ENCODE measurements at regions of chr19 and their contacts with region 1.

Region 1: DNA sequence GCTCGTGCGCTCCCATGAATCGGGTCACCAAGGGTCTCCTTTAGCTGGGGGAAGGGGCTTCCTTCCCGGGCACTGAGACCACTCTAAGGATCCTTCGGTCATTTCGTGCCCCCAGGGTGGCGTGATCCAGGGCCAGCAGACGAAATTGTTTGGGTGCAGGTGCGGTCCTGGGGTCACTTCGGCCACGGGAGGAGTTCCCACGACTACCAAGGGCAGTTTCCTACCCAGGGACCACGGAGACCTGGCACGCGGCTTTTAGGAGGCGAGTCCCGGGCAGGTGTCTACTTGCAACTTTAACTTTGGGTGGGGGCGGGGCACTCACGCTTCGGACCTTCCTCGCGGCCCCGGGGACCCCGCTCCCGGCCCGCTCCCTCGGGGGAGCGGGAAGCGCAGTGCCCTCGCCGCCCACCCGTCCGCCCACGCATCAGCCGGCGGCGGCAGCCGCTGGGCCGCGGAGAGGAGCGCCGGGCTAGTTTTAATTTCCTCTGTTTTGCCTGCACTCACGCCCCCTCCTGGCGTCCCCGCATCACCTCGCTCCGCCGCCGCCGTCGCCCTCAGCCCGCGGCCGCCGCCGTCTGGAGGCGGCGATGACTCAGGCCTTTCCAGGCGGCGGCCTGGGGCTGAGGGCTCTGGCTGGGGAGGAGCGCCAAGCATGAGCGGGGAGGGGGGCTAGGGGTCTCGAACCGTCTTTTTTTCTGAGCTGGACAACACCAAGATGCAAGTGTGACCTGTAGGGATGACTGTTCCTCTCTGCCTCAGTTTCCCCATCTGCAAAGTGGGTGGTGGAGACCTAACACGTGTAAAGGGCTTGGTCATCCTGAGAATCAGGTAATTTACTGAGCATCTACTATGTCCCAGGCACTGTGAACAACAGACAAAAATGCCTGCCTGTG is 21.8 kb downstream of the OLFM2 start:
- DNase-seq: peak; percentile 63 to 85
- H3K4me3 ChIP-seq: peak overlapping the region; percentile 68
- H3K27ac ChIP-seq: no peak overlapping the region
- H3K4me1 ChIP-seq: no peaks in the 10 kb centered on the region
- H3K27me3 ChIP-seq: no peaks in the 10 kb centered on the region
- CTCF ChIP-seq: peak; percentile 84

Region 2: DNA sequence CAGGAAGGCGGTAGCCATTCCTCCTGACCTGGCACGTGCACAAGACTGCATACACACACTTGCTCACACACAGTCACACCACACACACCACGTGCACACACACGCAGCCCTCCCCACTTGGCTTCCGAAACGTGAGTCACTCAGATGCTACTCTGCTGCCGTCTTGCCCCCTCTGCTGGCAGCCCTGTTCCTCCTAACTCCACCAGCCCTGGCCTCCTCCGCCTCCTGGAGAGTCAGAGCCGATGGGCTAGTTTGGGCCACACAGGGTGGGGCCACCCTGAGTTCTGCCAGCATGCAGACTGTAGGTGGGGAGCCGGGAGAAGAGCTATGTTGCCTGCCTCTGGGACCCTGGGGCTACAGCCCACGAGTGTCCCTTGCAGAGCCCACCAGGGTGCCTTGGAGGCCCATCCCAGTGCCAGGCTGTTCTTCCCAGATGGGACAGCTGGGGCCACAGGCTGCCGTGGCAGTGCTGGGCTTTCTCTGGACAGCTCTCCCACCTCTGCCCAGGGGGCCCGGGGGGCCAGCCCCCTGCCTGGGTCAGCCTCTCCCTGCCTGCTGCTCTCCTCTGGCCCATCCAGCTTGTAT is 67.4 kb before region 1 on chr19:
- CTCF ChIA-PET with region 1: interaction called, 3 read pairs
- POLR2A ChIA-PET with region 1: no interaction called
- intact Hi-C with region 1: loop called (anchors 5 kb)
- DNase-seq: peak in 1 of 2 experiments; percentile 41
- H3K4me3 ChIP-seq: no peak overlapping the region
- H3K27ac ChIP-seq: no peak overlapping the region
- H3K4me1 ChIP-seq: no peaks in the 10 kb centered on the region
- H3K27me3 ChIP-seq: no peaks in the 10 kb centered on the region
- CTCF ChIP-seq: peak; percentile 56; the same call in 1 of the 2 replicates

Measured in PC-9 (cell line).